Activated naive CD4-positive, alpha-beta T cell treated with anti-CD3 and anti-CD28 coated beads for 36 hours (primary cell): ENCODE measurements at regions of chr1 and their contacts with region 1.

Region 1: GRCh38 chr1:53238197-53239155 is at the start of gene MAGOH:
- DNase-seq: peak; percentile 96
- H3K4me3 Mint-ChIP-seq: peak within 1 kb of the TSS; percentile 94
- H3K27ac Mint-ChIP-seq: peak within 1 kb of the TSS; percentile 82
- H3K4me1 Mint-ChIP-seq: peaks cover 28% of the 10 kb centered on the region
- H3K27me3 Mint-ChIP-seq: no peaks in the 10 kb centered on the region
- total RNA-seq, gene MAGOH: 83.7 to 87.2 TPM

Region 2: DNA sequence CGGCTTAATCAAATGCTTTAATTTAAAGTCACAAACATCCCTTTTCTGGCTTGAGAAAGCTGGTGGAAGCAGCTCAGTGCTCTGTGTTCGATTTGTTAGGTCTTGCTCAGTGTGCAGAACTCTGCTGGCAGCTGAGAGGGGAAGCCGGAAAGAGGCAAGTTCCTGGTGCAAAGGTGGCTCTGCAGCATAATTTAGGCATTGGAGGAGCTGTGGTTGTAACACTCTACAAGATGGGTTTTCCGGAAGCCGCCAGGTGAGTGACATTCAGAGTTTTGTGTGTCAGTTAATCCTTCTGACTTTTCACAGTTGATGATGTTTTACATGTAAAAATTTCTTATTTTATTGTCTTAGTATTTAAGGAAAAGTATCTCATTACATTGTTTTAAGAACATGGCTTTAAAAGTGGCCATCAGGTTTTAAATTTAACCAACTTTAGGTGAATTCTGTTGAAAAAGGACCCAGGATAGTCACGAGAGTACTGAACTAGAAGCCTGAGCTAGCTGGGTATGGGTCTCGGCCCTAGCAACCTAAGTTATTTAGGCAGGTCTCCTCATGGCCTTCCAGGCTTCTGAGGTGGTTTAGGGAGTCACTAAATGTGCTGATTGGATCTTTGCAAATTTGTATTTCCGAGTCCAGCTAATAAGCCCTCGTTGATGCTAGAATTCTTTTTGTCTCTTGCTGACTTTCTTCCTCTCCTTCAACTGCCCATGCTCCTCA is 223.5 kb before region 1 on chr1:
- CTCF ChIA-PET with region 1: no interaction called
- intact Hi-C with region 1: loop called (anchors 1 kb)
- DNase-seq: peak; percentile 91
- H3K4me3 Mint-ChIP-seq: peak overlapping the region; percentile 78
- H3K27ac Mint-ChIP-seq: peak overlapping the region; percentile 60
- H3K4me1 Mint-ChIP-seq: peaks cover 20% of the 10 kb centered on the region
- H3K27me3 Mint-ChIP-seq: no peaks in the 10 kb centered on the region

Region 3: DNA sequence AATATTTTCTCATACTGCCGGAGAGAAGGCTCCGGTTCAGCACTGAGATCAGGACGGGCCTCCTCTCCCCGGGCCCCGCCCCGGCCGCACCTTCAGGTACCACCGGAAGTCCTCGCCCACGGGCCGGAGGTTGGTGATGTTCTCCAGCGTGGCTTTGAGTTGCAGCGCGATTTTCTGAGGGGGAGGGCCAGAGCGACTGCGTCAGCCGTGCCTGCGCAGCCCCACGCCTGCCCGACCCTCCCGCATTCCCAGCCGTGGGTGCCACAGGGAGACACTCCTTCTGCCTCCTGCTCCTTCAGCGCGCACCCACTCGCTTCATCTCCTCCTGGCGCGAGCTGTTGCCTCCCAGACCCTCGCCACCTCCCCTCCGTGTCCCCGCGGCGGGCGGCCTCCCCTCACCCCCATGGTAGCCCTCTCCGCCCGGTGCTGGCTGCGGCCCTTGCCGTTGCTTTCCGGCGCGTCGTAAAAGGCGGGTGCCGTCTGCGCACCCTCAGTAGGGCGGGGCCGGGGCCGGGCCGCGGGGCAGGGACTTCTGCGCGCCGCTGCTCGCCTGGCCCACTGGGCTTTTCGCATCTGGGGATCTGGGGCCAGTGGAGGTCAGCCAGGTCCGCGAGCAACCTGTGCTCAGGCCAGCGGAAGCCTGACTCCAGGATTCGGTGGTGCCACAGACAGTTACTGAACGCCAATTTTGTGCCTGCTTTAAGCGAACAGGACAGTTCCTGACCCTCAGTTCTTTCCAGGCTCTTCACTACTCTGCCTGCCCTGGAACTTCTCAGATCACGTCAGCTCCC is 18.1 kb before region 1 on chr1 and contains the start of gene CZIB:
- CTCF ChIA-PET with region 1: interaction called, 4 read pairs
- intact Hi-C with region 1: loop called (anchors 1 kb)
- DNase-seq: peak; percentile 96
- H3K4me3 Mint-ChIP-seq: peak within 1 kb of the TSS; percentile 91
- H3K27ac Mint-ChIP-seq: peak within 1 kb of the TSS; percentile 95
- H3K4me1 Mint-ChIP-seq: peaks cover 24% of the 10 kb centered on the region
- H3K27me3 Mint-ChIP-seq: no peaks in the 10 kb centered on the region
- total RNA-seq, gene CZIB: 44.4 to 45.6 TPM

Region 4: GRCh38 chr1:53765657-53766056 is 527.2 kb after region 1 on chr1:
- CTCF ChIA-PET with region 1: no interaction called
- intact Hi-C with region 1: no loop called
- DNase-seq: no peak
- H3K4me3 Mint-ChIP-seq: no peak overlapping the region
- H3K27ac Mint-ChIP-seq: no peak overlapping the region
- H3K4me1 Mint-ChIP-seq: peaks cover 12% of the 10 kb centered on the region
- H3K27me3 Mint-ChIP-seq: no peaks in the 10 kb centered on the region